ENCODE measurements at regions of chr1 and their contacts with region 1.

Region 1: GRCh38 chr1:34597877-34598514 is 156.9 kb upstream of the GJB5 start:
- DNase-seq: peak; percentile 79
- CTCF ChIP-seq: peak; percentile 91

Region 2: GRCh38 chr1:34113887-34114286 is 484.1 kb before region 1 on chr1:
- CTCF ChIA-PET with region 1: interaction called, 18 read pairs
- POLR2A ChIA-PET with region 1: no interaction called
- DNase-seq: no peak
- CTCF ChIP-seq: peak; percentile 31

Region 3: GRCh38 chr1:34582356-34582755 is 15.6 kb before region 1 on chr1:
- CTCF ChIA-PET with region 1: interaction called, 12 read pairs
- POLR2A ChIA-PET with region 1: no interaction called
- DNase-seq: no peak
- CTCF ChIP-seq: no peak

Measured in GM10248 (cell line).